ENCODE measurements at regions of chr6 and their contacts with region 1.

Region 1: DNA sequence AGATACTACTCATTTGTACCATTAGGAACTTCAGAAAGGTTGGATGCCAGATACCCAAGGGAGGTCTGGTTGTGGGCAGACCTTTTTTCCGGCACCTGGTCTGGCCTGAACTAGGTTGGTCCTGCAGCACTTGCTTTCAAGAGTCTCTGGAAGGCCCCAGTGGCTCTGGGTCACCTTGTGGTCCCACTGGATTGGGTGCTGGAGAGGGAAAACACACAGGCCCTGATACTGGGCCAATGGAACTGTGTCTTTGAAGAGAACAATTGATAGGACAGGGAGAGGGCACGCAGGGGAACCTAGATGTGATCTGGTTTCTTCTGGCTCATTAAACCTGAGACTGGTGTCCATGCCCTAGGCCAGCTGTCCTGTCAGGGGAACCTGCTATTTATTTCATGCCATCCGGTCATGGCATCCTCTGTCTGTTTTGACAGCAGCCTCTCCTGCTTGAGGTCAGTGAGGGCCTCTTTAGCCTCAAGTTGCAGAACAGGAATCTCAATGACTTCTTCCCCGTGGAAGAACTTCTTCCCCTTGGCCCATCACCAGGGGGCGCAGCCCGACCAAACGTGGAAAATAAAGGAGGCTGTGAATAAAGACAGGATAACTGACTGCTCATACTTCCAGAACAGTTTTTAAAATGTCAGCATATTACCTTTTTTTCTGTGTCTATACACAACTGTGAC is 25.0 kb downstream of the TAF8 start:
- ATAC-seq: peak; percentile 32 to 88 (median 56)
- H3K4me3 ChIP-seq: no peak overlapping the region
- H3K27ac ChIP-seq: no peak overlapping the region
- H3K4me1 ChIP-seq: no peaks in the 10 kb centered on the region

Region 2: GRCh38 chr6:42166444-42167141 is 91.3 kb after region 1 on chr6:
- in situ Hi-C with region 1: loop called in 3 of 9 experiments (anchors 10 to 25 kb)
- ATAC-seq: peak; percentile 66 to 93 (median 86)
- H3K4me3 ChIP-seq: no peak overlapping the region
- H3K27ac ChIP-seq: no peak overlapping the region
- H3K4me1 ChIP-seq: no peaks in the 10 kb centered on the region

Region 3: DNA sequence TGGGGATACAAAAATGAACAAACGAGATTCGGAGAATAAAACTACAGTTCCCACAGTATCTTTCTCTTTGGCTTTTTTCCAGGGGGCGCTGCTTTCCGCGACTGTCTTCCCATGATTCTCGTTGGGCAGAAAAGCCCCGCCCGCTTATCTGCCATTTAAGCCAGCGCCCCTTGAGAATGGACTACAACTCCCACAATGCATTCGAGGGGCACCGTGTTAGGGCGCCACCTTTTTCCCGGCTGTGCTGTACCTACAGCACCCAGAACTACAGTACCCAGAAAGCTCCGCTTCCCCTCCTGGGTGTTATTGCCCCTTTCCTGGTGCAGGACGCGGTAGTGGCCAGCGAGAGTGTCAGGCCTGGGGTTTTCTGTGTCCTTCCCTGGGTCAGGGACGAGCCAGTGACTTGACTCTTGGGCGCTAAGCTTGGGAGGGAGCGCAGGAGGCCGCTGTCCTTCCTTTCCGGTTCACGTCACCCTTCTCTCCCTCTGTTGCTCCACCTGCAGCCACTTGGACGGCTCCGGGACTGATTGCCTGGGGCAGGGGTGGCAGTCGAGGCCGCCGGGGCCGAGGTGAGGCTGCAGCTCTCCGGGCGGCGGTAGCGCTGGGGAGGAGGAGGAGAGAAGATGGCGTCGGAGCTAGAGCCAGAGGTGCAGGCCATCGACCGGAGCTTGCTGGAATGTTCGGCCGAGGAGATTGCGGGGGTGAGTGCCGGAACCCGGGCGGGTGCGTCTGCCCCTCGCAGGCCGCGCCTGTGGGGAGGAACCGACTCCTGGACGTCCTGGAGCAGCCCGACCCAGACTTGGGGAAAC is 488.6 kb after region 1 on chr6 and contains the start of gene UBR2:
- in situ Hi-C with region 1: loop called in 1 of 9 experiments (anchors 25 kb)
- ATAC-seq: peak; percentile 86 to 98 (median 98)
- H3K4me3 ChIP-seq: peak within 1 kb of the TSS; percentile 63 to 92 (median 68)
- H3K27ac ChIP-seq: peak within 1 kb of the TSS; percentile 80 to 92
- H3K4me1 ChIP-seq: peaks cover 0 to 4% of the 10 kb centered on the region in 2 donors
- total RNA-seq, gene UBR2: 13.4 to 38.9 (median 19.0) TPM